Activated B cell treated with CpG ODN at 0.5 μM for 24 hours (primary cell): ENCODE measurements at regions of chr4 and their contacts with region 1.

Region 1: DNA sequence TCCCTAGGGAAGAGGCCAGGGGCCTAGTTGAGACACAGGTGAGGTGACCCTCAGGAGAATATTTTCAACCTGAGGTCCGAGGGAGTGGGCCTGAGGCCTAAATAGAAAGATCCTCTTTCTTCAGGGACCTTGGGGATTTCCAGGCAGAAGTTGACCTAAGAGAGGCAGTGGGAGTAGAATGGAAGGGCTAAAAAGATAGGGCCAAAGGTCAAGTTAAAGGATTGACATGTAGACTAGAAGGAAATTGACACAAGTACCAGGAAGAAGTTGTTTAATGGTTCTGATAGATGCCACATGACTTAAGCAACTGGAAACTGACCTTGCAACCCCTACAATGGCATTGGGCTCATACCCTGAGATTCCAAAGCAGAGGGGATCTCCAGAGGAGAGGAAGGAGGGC is 76.9 kb downstream of the SHROOM3 start:
- DNase-seq: no peak
- ATAC-seq: no peak
- H3K4me3 Mint-ChIP-seq: no peak overlapping the region
- H3K27ac Mint-ChIP-seq: no peak overlapping the region
- H3K4me1 Mint-ChIP-seq: no peaks in the 10 kb centered on the region
- H3K27me3 Mint-ChIP-seq: no peaks in the 10 kb centered on the region
- CTCF ChIP-seq: no peak

Region 2: GRCh38 chr4:76758290-76758882 is 246.4 kb after region 1 on chr4:
- CTCF ChIA-PET with region 1: interaction called, 3 read pairs
- POLR2A ChIA-PET with region 1: no interaction called
- intact Hi-C with region 1: loop called (anchors 1 kb)
- DNase-seq: no peak
- ATAC-seq: no peak
- H3K4me3 Mint-ChIP-seq: no peak overlapping the region
- H3K27ac Mint-ChIP-seq: no peak overlapping the region
- H3K4me1 Mint-ChIP-seq: no peaks in the 10 kb centered on the region
- H3K27me3 Mint-ChIP-seq: no peaks in the 10 kb centered on the region
- CTCF ChIP-seq: peak; percentile 67

Region 3: DNA sequence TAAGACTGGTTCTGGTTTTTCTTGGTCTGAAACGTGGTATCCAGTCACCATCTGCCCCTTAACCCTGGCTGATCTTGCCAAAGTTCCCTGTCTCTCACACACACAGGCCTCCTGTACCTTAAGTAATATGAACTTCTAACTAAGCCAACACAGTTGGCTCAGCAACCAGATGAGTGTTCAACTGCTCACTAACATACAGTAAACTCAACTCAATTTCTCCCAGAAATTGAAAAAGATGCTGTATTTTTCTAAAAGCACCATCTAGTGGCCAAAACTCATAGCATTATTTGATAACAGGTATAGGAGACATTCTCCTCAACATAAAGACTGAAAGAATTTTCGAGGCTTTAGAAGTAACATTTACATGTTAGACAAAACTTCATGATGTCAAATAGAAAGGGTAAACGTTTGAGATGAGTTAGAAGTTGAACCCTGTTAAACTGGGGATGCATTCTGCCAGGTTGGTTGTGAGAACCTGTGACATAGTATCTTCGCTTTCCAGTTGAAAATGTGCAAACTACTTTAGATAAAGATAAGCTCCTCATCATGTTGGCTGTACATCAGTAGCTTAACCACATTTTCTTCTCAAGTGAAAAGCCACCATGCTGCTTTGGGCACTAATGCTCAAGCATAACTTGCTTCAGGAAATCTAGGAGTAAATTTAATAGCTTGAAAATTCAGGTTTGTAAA is 532.7 kb after region 1 on chr4:
- CTCF ChIA-PET with region 1: interaction called, 4 read pairs
- POLR2A ChIA-PET with region 1: no interaction called
- intact Hi-C with region 1: loop called (anchors 5 kb)
- DNase-seq: no peak
- ATAC-seq: no peak
- H3K4me3 Mint-ChIP-seq: no peak overlapping the region
- H3K27ac Mint-ChIP-seq: no peak overlapping the region
- H3K4me1 Mint-ChIP-seq: peaks cover 17% of the 10 kb centered on the region
- H3K27me3 Mint-ChIP-seq: no peaks in the 10 kb centered on the region
- CTCF ChIP-seq: peak; percentile 31

Region 4: GRCh38 chr4:77308843-77309242 is 796.9 kb after region 1 on chr4:
- CTCF ChIA-PET with region 1: no interaction called
- POLR2A ChIA-PET with region 1: no interaction called
- intact Hi-C with region 1: loop called (anchors 5 kb)
- DNase-seq: no peak
- ATAC-seq: peak; percentile 40
- H3K4me3 Mint-ChIP-seq: no peak overlapping the region
- H3K27ac Mint-ChIP-seq: no peak overlapping the region
- H3K4me1 Mint-ChIP-seq: no peaks in the 10 kb centered on the region
- H3K27me3 Mint-ChIP-seq: no peaks in the 10 kb centered on the region
- CTCF ChIP-seq: no peak

Region 5: GRCh38 chr4:77358315-77358928 is 846.5 kb after region 1 on chr4:
- CTCF ChIA-PET with region 1: no interaction called
- POLR2A ChIA-PET with region 1: no interaction called
- intact Hi-C with region 1: loop called (anchors 5 kb)
- DNase-seq: no peak
- ATAC-seq: no peak
- H3K4me3 Mint-ChIP-seq: no peak overlapping the region
- H3K27ac Mint-ChIP-seq: no peak overlapping the region
- H3K4me1 Mint-ChIP-seq: peaks cover 17% of the 10 kb centered on the region
- H3K27me3 Mint-ChIP-seq: peaks cover 3% of the 10 kb centered on the region
- CTCF ChIP-seq: no peak